Mammary epithelial cell (primary cell): ENCODE measurements at regions of chr16 and their contacts with region 1.

Region 1: GRCh38 chr16:57147381-57148221 is 38.2 kb downstream of the PSME3IP1 start:
- DNase-seq: no peak
- H3K4me3 ChIP-seq: no peak overlapping the region
- H3K27ac ChIP-seq: no peak overlapping the region
- H3K4me1 ChIP-seq: peaks cover 8% of the 10 kb centered on the region
- H3K27me3 ChIP-seq: no peaks in the 10 kb centered on the region
- CTCF ChIP-seq: no peak

Region 2: GRCh38 chr16:57077714-57078113 is 69.9 kb before region 1 on chr16:
- CTCF ChIA-PET with region 1: no interaction called
- dilution Hi-C with region 1: loop called (anchors 5 kb)
- in situ Hi-C with region 1: no loop called
- intact Hi-C with region 1: no loop called
- DNase-seq: no peak
- H3K4me3 ChIP-seq: no peak overlapping the region
- H3K27ac ChIP-seq: no peak overlapping the region
- H3K4me1 ChIP-seq: no peaks in the 10 kb centered on the region
- H3K27me3 ChIP-seq: no peaks in the 10 kb centered on the region
- CTCF ChIP-seq: no peak

Region 3: DNA sequence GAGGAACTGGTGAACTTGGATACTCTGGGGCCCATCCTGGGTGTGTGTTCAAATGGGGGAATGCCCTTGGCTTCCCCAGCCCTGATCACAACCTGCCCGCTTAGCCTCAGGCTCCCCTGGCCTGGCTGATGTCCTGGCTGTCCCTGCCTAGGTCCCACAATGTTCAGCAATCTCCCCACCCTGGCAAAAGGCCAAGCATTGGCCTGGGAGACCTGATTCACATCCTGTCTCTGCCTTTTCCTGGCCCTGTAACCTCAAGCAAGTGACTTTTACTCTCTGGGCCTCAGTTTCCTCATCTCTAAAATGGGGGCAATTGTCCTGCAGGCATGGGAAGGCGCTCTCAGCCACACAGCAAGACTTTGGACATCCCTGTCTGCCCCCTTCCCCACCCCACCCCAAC is 40.8 kb before region 1 on chr16:
- CTCF ChIA-PET with region 1: no interaction called
- dilution Hi-C with region 1: loop called (anchors 5 kb)
- in situ Hi-C with region 1: no loop called
- intact Hi-C with region 1: no loop called
- DNase-seq: no peak
- H3K4me3 ChIP-seq: no peak overlapping the region
- H3K27ac ChIP-seq: no peak overlapping the region
- H3K4me1 ChIP-seq: no peaks in the 10 kb centered on the region
- H3K27me3 ChIP-seq: no peaks in the 10 kb centered on the region
- CTCF ChIP-seq: no peak